ENCODE measurements at regions of chr19 and their contacts with region 1.

Region 1: DNA sequence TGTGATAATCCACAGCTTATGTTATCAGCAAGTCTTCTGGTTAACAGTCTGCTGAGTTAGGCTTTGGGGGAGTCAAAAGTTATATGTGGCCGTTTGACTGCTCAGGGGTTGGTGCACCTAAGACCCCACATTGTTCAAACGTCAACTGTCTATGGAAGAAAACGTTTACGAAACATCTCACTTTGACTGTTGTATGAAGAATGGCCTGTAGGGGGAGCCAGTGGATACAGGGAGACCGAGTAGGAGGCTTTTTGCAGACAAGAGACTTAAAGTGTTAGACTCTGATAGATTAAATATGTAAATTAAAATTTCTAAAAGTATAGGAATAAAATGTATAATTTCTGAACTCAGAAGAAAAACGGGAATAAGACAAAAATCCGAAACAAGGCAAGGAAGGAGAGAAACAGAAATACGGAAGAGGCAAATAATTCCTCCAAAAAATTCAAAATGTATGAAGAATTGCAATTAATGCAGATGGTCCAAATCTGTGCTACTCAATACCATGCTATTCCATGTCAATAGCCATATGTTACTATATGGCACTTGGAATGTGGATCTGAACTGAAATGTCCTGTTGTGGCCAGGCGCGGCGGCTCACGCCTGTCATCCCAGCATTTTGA is 37.8 kb downstream of the TNFSF14 start:
- H3K4me3 Mint-ChIP-seq: no peak overlapping the region
- H3K27ac Mint-ChIP-seq: no peak overlapping the region
- H3K4me1 Mint-ChIP-seq: peaks cover 9% of the 10 kb centered on the region
- H3K27me3 Mint-ChIP-seq: peaks cover 52% of the 10 kb centered on the region

Region 2: GRCh38 chr19:6429419-6430221 is 202.5 kb before region 1 on chr19:
- intact Hi-C with region 1: no loop called
- H3K4me3 Mint-ChIP-seq: no peak overlapping the region
- H3K27ac Mint-ChIP-seq: no peak overlapping the region
- H3K4me1 Mint-ChIP-seq: peaks cover 14% of the 10 kb centered on the region
- H3K27me3 Mint-ChIP-seq: peaks cover 13% of the 10 kb centered on the region

Region 3: DNA sequence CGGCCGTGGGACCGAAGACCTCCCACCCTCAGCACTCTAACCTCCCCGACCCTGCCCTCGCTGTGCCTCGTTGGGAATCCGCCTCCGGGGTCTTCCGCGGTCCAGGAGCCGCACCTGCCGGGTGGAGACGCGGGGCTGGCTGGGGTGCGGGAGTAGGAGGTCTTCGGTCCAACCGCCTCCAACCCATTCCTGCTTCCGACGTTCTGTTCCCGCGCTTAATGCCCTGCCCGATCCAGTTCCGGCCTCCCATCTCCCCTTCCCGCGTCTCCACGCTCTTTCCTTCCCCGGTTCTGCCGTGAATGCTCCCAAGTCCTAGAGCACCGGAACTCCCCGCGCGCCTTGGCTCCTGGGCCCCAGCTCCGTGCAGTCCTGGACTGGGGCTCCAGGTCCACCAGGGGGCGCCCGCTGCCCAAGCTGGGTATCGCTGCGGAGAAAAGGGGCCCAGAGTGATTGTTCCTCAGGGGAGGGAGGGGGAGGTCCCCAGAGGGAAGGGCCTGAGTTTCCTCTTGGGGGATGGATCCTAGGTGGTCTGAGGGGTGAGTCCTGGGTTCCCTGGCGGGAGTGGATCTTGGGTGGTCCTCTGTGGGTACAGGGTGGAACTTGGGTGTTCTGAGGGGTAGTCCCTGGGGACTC is 115.3 kb before region 1 on chr19:
- intact Hi-C with region 1: loop called (anchors 2 kb)
- H3K4me3 Mint-ChIP-seq: peak overlapping the region; percentile 87
- H3K27ac Mint-ChIP-seq: peak overlapping the region; percentile 85
- H3K4me1 Mint-ChIP-seq: peaks cover 39% of the 10 kb centered on the region
- H3K27me3 Mint-ChIP-seq: peaks cover 35% of the 10 kb centered on the region

Region 4: GRCh38 chr19:6663236-6664201 is 31.4 kb after region 1 on chr19:
- intact Hi-C with region 1: no loop called
- H3K4me3 Mint-ChIP-seq: no peak overlapping the region
- H3K27ac Mint-ChIP-seq: peak overlapping the region; percentile 48
- H3K4me1 Mint-ChIP-seq: peaks cover 12% of the 10 kb centered on the region
- H3K27me3 Mint-ChIP-seq: peaks cover 35% of the 10 kb centered on the region

Region 5: GRCh38 chr19:6718741-6719539 is 86.8 kb after region 1 on chr19:
- intact Hi-C with region 1: loop called (anchors 10 kb)
- H3K4me3 Mint-ChIP-seq: no peak overlapping the region
- H3K27ac Mint-ChIP-seq: peak overlapping the region; percentile 3
- H3K4me1 Mint-ChIP-seq: peaks cover 47% of the 10 kb centered on the region
- H3K27me3 Mint-ChIP-seq: peaks cover 26% of the 10 kb centered on the region

Measured in dendritic cell treated with granulocyte-macrophage colony-stimulating factor and Interleukin-4, amounts not matched to agents 40 ng/mL and 50 ng/mL, for 4 days (primary cell).